ENCODE measurements at regions of chr5 and their contacts with region 1.

Region 1: DNA sequence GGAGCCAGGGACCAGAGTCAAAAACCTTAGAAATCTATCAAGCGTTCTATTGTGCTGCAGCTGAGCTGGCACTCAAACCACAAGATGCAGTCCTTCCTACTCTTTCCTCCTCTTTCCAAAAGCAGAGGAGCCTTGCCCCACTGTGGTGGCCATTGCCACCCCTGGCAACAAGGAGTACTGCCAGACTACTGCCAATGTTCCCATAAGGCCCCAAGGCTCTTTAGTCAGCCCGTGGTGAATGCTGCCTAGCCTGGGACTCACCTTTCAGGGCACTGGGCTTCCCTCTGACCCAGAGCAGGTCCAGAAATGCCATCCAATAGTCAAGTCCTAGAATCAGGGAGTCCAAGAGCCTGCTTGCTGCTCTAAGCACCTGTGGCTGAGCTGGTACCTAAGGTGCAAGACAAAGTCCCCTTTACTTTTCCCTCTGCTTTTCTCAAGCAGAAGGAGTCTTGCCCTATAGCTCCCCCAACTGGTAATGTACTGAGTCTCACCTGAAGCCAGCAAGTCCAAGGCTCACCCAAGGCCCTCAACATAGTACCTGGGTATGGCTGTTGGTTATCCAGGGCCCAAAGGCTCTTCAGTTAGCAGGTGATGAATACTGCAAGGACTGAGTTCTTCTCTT is 219.4 kb downstream of the ATPSCKMT start:
- DNase-seq: peak in 1 of 2 experiments; percentile 62
- H3K4me3 ChIP-seq: no peak overlapping the region
- H3K27ac ChIP-seq: no peak overlapping the region
- H3K4me1 ChIP-seq: no peaks in the 10 kb centered on the region; a peak in 1 of 7 replicates
- H3K27me3 ChIP-seq: no peaks in the 10 kb centered on the region
- CTCF ChIP-seq: peak; percentile 48 to 68 (median 67)
- EP300 ChIP-seq: no peak
- POLR2A ChIP-seq: no peak
- RAD21 ChIP-seq: peak; percentile 75 to 85

Region 2: GRCh38 chr5:9513827-9514226 is 516.5 kb before region 1 on chr5:
- CTCF ChIA-PET with region 1: interaction called, 10 read pairs
- POLR2A ChIA-PET with region 1: no interaction called
- DNase-seq: no peak
- H3K4me3 ChIP-seq: no peak overlapping the region
- H3K27ac ChIP-seq: no peak overlapping the region
- H3K4me1 ChIP-seq: no peaks in the 10 kb centered on the region
- H3K27me3 ChIP-seq: no peaks in the 10 kb centered on the region
- CTCF ChIP-seq: peak in 2 of 3 experiments; percentile 44 to 48; a peak in 2 of 4 replicates
- EP300 ChIP-seq: no peak
- POLR2A ChIP-seq: no peak
- RAD21 ChIP-seq: peak; percentile 43 to 53; a peak in 3 of 4 replicates

Region 3: GRCh38 chr5:9861666-9862256 is 168.6 kb before region 1 on chr5:
- CTCF ChIA-PET with region 1: interaction called, 13 read pairs
- POLR2A ChIA-PET with region 1: no interaction called
- DNase-seq: no peak
- H3K4me3 ChIP-seq: no peak overlapping the region
- H3K27ac ChIP-seq: no peak overlapping the region
- H3K4me1 ChIP-seq: no peaks in the 10 kb centered on the region; a peak in 1 of 7 replicates
- H3K27me3 ChIP-seq: peaks cover 0 to 2% (median 0%) of the 10 kb centered on the region in 4 experiments; a peak in 1 of 7 replicates
- CTCF ChIP-seq: no peak
- EP300 ChIP-seq: no peak
- POLR2A ChIP-seq: no peak
- RAD21 ChIP-seq: no peak

Region 4: GRCh38 chr5:9924614-9925013 is 105.7 kb before region 1 on chr5:
- CTCF ChIA-PET with region 1: interaction called, 18 read pairs
- POLR2A ChIA-PET with region 1: no interaction called
- DNase-seq: no peak
- H3K4me3 ChIP-seq: no peak overlapping the region
- H3K27ac ChIP-seq: no peak overlapping the region
- H3K4me1 ChIP-seq: peaks cover 0 to 8% (median 1%) of the 10 kb centered on the region in 4 experiments; a peak in 4 of 7 replicates
- H3K27me3 ChIP-seq: peaks cover 0 to 1% (median 0%) of the 10 kb centered on the region in 4 experiments; a peak in 2 of 7 replicates
- CTCF ChIP-seq: no peak
- EP300 ChIP-seq: no peak
- POLR2A ChIP-seq: no peak
- RAD21 ChIP-seq: no peak

Region 5: GRCh38 chr5:10018203-10019060 is 11.9 kb before region 1 on chr5:
- CTCF ChIA-PET with region 1: interaction called, 27 read pairs
- POLR2A ChIA-PET with region 1: no interaction called
- DNase-seq: no peak
- H3K4me3 ChIP-seq: no peak overlapping the region
- H3K27ac ChIP-seq: no peak overlapping the region
- H3K4me1 ChIP-seq: peaks cover 0 to 5% (median 0%) of the 10 kb centered on the region in 4 experiments; a peak in 1 of 7 replicates
- H3K27me3 ChIP-seq: no peaks in the 10 kb centered on the region
- CTCF ChIP-seq: no peak
- EP300 ChIP-seq: no peak
- POLR2A ChIP-seq: no peak
- RAD21 ChIP-seq: no peak

Region 6: DNA sequence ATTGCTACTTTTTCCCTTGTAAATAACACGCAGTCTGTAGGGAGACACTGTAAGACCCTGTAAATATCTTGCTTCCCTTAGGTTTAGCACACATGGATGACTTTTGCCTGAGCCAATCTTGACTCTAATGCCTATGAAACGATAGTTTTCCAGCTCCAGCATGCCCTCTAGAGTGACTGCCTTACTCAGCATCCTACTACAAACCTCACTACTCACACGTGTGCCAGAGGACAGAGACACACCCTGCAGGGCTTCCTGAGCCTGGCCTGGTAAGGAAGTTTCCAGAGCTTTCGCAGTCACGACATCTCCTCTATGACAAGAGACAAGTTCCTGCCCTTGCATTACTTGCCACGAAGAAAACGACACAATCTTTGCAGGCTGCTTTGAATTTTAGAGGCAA is 81.2 kb after region 1 on chr5:
- CTCF ChIA-PET with region 1: interaction called, 22 read pairs
- POLR2A ChIA-PET with region 1: no interaction called
- DNase-seq: peak in 1 of 2 experiments; percentile 68
- H3K4me3 ChIP-seq: no peak overlapping the region
- H3K27ac ChIP-seq: no peak overlapping the region
- H3K4me1 ChIP-seq: no peaks in the 10 kb centered on the region
- H3K27me3 ChIP-seq: no peaks in the 10 kb centered on the region; a peak in 1 of 7 replicates
- CTCF ChIP-seq: peak; percentile 43 to 87 (median 79)
- EP300 ChIP-seq: no peak
- POLR2A ChIP-seq: no peak
- RAD21 ChIP-seq: peak; percentile 77 to 83

Measured in H1 (cell line).